PC-9 (cell line): ENCODE measurements at regions of chr6 and their contacts with region 1.

Region 1: GRCh38 chr6:24699521-24700359 is 19.2 kb downstream of the C6orf62 start:
- DNase-seq: no peak
- H3K4me3 ChIP-seq: no peak overlapping the region
- H3K27ac ChIP-seq: no peak overlapping the region
- H3K4me1 ChIP-seq: no peaks in the 10 kb centered on the region
- H3K27me3 ChIP-seq: no peaks in the 10 kb centered on the region
- CTCF ChIP-seq: no peak

Region 2: DNA sequence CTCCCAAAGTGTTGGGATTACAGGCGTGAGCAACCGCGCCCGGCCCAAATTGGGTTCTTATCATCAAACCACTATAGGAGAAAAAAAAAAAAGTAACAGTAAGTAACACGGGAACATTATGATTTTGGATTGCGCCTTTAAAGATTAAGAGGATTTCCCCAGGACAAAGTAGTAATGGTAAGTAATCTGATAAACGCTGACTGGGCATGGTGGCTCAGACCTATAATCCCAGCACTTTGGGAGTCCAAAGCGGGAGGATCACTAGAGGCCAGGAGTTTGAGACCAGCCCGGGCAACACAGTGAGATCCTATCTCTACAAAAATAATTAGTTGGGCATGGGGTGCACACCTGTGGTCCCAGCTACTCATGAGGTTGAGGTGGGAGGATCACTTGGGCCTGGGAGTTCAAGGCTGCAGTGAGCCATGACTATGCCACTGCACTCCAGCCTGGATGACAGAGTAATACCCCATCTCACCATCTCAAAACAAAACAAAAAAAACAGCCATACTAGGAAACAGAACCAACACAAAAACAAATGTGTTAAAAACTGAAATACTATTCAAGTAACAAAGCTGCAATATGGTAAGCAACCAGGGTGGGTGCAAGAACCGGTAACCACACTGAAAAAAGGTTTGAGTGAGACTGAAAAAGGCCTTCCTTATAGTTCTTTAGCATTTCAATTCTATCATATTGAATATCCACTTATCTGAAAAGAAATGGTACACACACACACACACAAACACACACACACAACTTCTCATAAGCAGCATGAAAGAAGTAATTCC is 11.0 kb after region 1 on chr6:
- CTCF ChIA-PET with region 1: interaction called, 3 read pairs
- POLR2A ChIA-PET with region 1: interaction called, 30 read pairs
- intact Hi-C with region 1: no loop called
- DNase-seq: no peak
- H3K4me3 ChIP-seq: no peak overlapping the region
- H3K27ac ChIP-seq: no peak overlapping the region
- H3K4me1 ChIP-seq: 0 out of 2 replicates have a peak, but pooled peaks cover 1% of the 10 kb centered on the region
- H3K27me3 ChIP-seq: no peaks in the 10 kb centered on the region
- CTCF ChIP-seq: no peak